HepG2 (cell line): ENCODE measurements at regions of chr12 and their contacts with region 1.

Region 1: DNA sequence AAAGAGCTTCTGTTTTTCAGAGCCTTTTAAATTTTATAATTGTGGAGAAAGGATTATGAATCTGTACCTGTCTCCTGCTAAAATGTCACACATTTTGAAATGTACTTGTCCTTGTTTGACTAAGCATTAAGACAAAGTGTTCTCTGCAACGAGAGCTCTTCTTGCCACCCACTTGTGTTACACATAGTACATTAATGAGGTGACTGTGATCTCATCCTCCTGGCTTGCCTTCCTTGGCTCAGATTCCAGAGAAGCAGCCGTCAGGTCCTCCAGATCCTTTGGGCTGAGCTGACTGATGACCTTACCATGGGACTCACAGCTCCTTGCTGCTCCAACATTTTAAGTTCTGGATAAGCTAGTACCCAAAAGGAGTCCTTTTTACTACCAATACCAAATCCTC is 81.4 kb downstream of the BBS10 start:
- DNase-seq: no peak
- ATAC-seq: no peak
- H3K4me3 ChIP-seq: no peak overlapping the region
- H3K27ac ChIP-seq: no peak overlapping the region
- H3K4me1 ChIP-seq: no peaks in the 10 kb centered on the region
- H3K27me3 ChIP-seq: peaks cover 0 to 4% of the 10 kb centered on the region in 2 experiments; a peak in 3 of 5 replicates
- CTCF ChIP-seq: no peak
- EP300 ChIP-seq: no peak
- POLR2A ChIP-seq: no peak
- RAD21 ChIP-seq: no peak

Region 2: DNA sequence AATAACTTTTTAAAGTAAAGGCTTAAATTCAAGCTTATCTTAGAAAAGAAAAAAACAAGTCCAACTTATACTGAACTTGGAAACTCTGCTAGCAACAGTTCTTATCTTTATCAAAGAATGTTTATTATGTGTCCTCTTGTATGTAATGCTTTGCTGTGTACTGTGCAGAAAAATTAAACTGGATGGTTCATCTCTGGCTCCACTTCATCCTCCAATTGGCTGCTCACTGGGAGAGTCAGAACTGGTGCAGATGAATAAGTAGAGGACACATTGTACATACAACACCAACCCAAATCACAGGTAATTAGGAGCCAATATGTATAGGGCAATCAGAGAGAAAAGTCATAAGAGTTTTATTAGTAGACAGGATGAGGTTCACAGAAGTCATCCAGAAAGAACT is 58.7 kb before region 1 on chr12:
- CTCF ChIA-PET with region 1: no interaction called
- POLR2A ChIA-PET with region 1: no interaction called
- in situ Hi-C with region 1: no loop called
- intact Hi-C with region 1: loop called (anchors 2 kb)
- DNase-seq: no peak
- ATAC-seq: no peak
- H3K4me3 ChIP-seq: no peak overlapping the region
- H3K27ac ChIP-seq: no peak overlapping the region
- H3K4me1 ChIP-seq: no peaks in the 10 kb centered on the region
- H3K27me3 ChIP-seq: peaks cover 0 to 3% of the 10 kb centered on the region in 2 experiments; a peak in 3 of 5 replicates
- CTCF ChIP-seq: no peak
- EP300 ChIP-seq: no peak
- POLR2A ChIP-seq: no peak
- RAD21 ChIP-seq: no peak